ENCODE measurements at regions of chr11 and their contacts with region 1.

Region 1: DNA sequence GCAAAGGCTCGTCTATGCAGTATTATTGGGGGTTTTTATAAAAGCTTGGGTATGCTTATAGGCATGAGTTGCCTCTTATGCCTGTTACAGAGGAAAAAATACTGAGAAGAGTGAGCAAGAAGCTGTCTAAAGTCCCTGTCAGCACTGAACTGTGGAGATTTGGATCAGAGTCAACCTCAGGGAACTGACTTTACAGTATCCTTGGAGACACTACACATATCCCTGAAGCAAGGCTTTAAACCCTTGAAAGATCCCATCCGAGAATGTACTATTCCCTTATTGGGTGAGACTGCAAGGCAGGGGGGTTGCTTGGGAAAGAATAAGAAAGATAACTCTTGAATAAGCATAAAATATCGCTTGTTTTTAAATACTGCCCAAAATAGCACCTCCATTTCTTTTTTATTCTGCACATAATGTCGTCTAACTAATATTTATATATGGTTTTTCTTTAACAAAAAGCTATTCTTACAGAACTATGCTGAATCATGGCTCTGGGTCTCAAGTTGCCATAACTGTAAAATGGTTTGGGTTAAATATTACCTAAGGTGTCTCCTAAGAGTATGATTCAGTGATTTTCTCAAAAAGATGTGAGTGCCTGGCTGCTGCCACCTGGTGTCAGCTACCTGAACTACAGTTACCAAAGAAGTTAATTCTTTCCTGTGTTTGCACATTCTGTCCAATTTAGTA is 1062.8 kb downstream of the DLG2 start:
- DNase-seq: peak; percentile 14
- H3K4me3 Mint-ChIP-seq: no peak overlapping the region
- H3K27ac Mint-ChIP-seq: no peak overlapping the region
- H3K4me1 Mint-ChIP-seq: no peaks in the 10 kb centered on the region
- H3K27me3 Mint-ChIP-seq: no peaks in the 10 kb centered on the region

Region 2: GRCh38 chr11:83827940-83828554 is 736.3 kb before region 1 on chr11:
- CTCF ChIA-PET with region 1: interaction called, 3 read pairs
- POLR2A ChIA-PET with region 1: no interaction called
- intact Hi-C with region 1: loop called (anchors 2 kb)
- DNase-seq: no peak
- H3K4me3 Mint-ChIP-seq: no peak overlapping the region
- H3K27ac Mint-ChIP-seq: no peak overlapping the region
- H3K4me1 Mint-ChIP-seq: no peaks in the 10 kb centered on the region
- H3K27me3 Mint-ChIP-seq: peaks cover 4% of the 10 kb centered on the region

Region 3: GRCh38 chr11:83836883-83837654 is 727.3 kb before region 1 on chr11:
- CTCF ChIA-PET with region 1: interaction called, 3 read pairs
- POLR2A ChIA-PET with region 1: no interaction called
- intact Hi-C with region 1: loop called (anchors 2 kb)
- DNase-seq: peak; percentile 19
- H3K4me3 Mint-ChIP-seq: no peak overlapping the region
- H3K27ac Mint-ChIP-seq: no peak overlapping the region
- H3K4me1 Mint-ChIP-seq: no peaks in the 10 kb centered on the region
- H3K27me3 Mint-ChIP-seq: peaks cover 1% of the 10 kb centered on the region

Measured in activated CD4-positive, alpha-beta memory T cell treated with anti-CD3 and anti-CD28 coated beads for 36 hours (primary cell).